ENCODE measurements at regions of chr10 and their contacts with region 1.

Region 1: DNA sequence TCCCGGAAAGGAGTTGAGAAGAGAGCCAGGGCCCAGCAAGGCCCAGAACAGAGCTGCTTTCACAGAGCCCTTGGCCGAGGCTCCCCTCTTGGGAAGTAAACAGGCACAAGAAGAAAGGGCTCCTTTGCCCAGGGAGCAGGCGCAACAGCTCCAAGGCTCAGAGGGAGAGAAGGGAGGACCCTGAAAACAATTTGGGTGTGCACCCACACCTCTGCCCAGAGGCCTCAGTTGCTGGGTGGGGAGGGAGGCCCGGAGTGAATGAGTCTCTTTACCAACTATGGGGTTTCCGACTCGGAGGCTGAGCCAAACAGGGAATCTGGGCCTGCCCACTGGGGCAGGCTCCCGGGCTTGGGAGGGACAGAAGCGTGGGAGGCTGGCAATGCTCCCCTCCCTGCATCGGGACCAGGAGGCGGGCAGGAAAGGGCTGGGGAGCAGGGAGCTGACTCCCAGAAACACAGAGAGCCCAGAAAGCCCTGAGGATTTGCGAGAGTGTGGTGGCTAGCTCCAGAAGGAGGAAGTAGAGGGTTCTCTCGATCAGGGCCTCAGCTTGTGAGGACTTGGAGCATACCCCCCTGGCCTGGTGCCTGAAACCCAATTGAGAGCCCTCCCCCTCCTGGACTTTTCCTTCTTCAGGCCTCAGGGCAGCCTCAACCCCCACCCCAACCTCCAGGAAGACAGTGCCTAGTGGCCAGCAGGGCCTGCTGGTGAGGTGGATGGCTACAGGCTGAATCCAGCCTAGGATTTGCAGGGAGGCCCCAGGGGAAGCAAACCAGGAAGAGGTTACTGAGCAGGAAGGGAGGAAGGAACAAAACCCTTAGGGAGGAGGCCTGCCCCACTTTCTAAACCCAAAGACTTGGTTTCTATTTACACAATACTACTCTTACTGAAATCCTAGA is 6.2 kb downstream of the C10orf105 start:
- DNase-seq: peak; percentile 57 to 83
- ATAC-seq: peak; percentile 67

Region 2: GRCh38 chr10:71597821-71598498 is 115.4 kb before region 1 on chr10:
- intact Hi-C with region 1: no loop called
- DNase-seq: peak in 1 of 2 donors; percentile 39
- ATAC-seq: peak; percentile 73

Region 3: DNA sequence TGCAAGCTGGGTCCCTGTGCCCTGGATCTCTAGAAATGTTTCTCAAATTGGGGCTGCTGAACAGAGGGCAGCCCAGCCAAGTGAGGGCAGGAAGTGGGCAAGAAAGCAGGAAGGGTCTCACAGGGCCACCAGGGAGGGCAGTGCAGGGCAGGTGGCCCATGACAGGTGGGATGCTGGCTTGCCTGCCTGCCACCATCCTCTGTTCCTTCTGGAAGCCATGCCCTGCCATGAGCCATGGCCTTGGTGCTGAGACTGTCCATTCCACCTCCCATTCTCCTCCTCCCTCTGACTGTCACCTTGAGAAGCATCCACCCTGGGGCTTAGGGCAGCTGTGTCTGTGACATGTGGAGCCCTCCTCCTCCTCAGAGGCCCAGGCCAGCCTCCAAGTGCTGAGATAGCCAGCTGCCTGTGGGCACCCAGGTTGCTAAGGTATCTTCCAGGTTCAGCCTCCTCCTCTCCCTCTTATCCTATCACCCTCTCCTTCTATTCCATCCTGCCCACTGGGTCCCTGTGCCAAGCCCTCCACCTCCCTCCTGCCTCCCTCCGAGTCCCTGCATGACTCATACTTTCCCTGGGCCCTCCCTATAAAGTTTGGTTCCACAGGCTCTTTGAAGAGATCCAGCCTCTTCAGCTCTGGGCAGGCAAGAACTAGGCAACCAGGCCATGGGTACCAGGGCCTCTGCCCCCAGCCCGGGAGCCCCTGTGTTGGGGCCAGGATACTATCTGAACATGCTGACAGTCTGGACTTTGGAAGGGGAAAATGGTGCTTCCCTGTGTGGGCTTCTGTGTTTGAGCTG is 58.6 kb after region 1 on chr10:
- intact Hi-C with region 1: loop called in 1 of 2 experiments (anchors 10 kb)
- DNase-seq: peak; percentile 50 to 80
- ATAC-seq: no peak

Region 4: DNA sequence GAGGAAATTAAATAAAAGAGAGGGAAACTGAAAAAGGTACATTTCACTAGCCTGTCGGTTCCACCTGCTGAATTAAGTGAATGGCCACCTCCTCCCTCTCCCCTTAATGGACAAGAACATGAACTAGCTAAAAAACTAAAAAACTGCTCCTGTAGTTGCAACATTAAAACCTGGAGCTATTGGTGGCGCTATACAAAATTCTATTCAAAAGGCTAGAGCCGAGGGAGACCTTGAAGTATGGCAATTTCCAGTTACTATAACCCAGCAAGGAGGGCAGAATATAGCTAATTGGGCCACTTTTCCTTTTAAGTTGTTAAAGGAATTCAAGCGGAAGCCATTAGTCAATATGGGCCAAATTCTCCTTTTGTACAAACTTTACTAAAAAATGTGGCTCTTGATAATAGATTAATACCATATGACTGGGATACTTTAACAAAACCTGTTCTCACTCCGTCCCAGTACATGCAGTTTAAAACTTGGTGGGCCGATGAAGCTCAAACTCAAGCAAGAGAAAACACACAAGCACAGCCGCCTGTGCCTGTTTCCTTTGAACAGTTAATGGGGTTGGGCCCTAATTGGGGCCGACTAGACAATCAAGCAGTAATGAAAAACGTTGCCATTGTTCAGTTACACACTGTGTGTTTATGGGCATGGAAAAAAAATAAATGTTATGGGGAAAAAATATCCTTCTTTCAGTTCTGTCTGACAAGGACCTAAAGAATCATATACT is 244.3 kb after region 1 on chr10:
- intact Hi-C with region 1: no loop called
- DNase-seq: no peak
- ATAC-seq: no peak

Region 5: GRCh38 chr10:72292223-72292691 is 578.9 kb after region 1 on chr10:
- intact Hi-C with region 1: no loop called
- DNase-seq: peak; percentile 44 to 71
- ATAC-seq: peak; percentile 87

Measured in left colon (tissue), 2 donors.